ENCODE measurements at regions of chr6 and their contacts with region 1.

Region 1: DNA sequence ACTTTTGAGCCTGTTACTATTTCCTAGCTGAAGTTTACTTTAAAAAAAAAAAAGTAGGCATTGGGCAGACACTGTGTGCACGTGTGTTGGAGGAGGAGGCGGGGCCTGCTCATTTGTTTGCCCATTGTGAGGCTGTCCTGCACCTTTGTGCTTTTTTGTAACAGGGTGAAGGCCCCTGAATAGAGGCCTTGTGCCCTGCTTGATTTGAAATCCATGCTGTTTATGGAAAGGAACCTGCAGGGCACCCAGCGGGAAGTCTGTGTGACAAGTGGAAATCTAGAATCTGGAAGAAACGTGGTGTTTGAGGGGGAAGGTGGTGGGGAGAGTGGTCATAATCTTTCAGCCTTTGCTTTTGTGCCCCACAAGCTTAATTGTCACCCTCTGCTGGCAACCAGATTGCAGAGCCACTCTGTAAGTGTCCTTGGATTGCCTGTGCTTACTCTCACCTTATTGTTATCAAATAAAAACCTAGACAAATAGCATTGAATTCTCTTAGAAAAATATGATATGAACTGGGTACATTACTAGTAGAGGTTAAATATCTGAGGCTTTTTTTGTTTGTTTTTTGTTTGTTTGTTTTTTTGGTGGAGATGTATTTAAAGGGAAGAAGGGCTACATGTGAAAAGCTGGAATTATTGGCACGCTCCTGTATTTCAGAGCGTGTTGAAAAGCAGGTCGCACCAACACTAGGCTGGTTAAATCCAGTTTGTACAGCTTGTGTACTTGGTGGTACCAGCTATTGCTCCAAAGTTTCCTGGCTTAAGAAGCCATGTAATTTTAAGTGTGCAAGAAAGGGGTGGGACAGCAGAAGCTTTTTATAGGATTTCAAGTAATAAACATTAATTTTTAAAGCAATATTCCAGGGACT is 156.3 kb downstream of the ARID1B start:
- DNase-seq: no peak
- ATAC-seq: no peak
- H3K4me3 ChIP-seq: no peak overlapping the region
- H3K27ac ChIP-seq: no peak overlapping the region
- H3K4me1 ChIP-seq: peaks cover 18% of the 10 kb centered on the region
- H3K27me3 ChIP-seq: no peaks in the 10 kb centered on the region
- CTCF ChIP-seq: peak; percentile 36

Region 2: GRCh38 chr6:156617376-156617775 is 316.1 kb before region 1 on chr6:
- CTCF ChIA-PET with region 1: no interaction called
- POLR2A ChIA-PET with region 1: no interaction called
- in situ Hi-C with region 1: no loop called
- intact Hi-C with region 1: no loop called
- DNase-seq: no peak
- ATAC-seq: no peak
- H3K4me3 ChIP-seq: no peak overlapping the region
- H3K27ac ChIP-seq: no peak overlapping the region
- H3K4me1 ChIP-seq: no peaks in the 10 kb centered on the region
- H3K27me3 ChIP-seq: no peaks in the 10 kb centered on the region
- CTCF ChIP-seq: no peak

Region 3: DNA sequence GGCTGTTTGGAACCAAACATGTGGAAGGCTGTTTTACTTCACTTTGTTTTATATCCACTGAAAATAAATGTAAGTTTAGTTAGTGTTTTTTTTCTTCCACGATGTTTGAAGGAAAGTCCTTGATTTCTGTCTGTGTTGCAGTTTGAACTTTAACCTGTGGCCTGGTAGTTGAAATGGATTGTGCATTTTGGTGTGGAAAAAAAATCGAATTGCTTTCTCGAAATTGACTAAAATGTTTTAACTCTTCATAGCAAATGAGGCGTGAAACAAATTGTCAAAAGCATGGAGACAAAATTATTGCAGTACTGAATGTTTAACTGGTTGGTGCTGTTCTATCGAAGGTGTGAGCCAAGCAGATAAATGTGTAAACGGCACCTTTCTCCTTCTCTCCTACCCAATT is 131.7 kb before region 1 on chr6:
- CTCF ChIA-PET with region 1: interaction called, 5 read pairs
- POLR2A ChIA-PET with region 1: interaction called, 15 read pairs
- in situ Hi-C with region 1: no loop called
- intact Hi-C with region 1: no loop called
- DNase-seq: no peak
- ATAC-seq: no peak
- H3K4me3 ChIP-seq: no peak overlapping the region
- H3K27ac ChIP-seq: no peak overlapping the region
- H3K4me1 ChIP-seq: peaks cover 7% of the 10 kb centered on the region; the same call in 1 of the 2 replicates
- H3K27me3 ChIP-seq: no peaks in the 10 kb centered on the region
- CTCF ChIP-seq: no peak

Measured in Panc1 (cell line).